Heart left ventricle (tissue), 16 donors: ENCODE measurements at regions of chr6 and their contacts with region 1.

Region 1: GRCh38 chr6:53171605-53172446 is 23.2 kb upstream of the GCM1 start:
- DNase-seq: peak; percentile 83 to 94 (median 87)
- ATAC-seq: peak; percentile 64 to 97 (median 94)
- H3K4me3 ChIP-seq: no peak overlapping the region
- H3K27ac ChIP-seq: no peak overlapping the region
- H3K4me1 ChIP-seq: peaks cover 0 to 11% (median 1%) of the 10 kb centered on the region in 12 donors
- H3K27me3 ChIP-seq: no peaks in the 10 kb centered on the region
- CTCF ChIP-seq: peak; percentile 100
- POLR2A ChIP-seq: no peak

Region 2: GRCh38 chr6:52904562-52905279 is 267.1 kb before region 1 on chr6:
- intact Hi-C with region 1: no loop called
- DNase-seq: no peak
- ATAC-seq: no peak
- H3K4me3 ChIP-seq: no peak overlapping the region
- H3K27ac ChIP-seq: no peak overlapping the region
- H3K4me1 ChIP-seq: no peaks in the 10 kb centered on the region
- H3K27me3 ChIP-seq: no peaks in the 10 kb centered on the region
- CTCF ChIP-seq: no peak
- POLR2A ChIP-seq: no peak

Region 3: DNA sequence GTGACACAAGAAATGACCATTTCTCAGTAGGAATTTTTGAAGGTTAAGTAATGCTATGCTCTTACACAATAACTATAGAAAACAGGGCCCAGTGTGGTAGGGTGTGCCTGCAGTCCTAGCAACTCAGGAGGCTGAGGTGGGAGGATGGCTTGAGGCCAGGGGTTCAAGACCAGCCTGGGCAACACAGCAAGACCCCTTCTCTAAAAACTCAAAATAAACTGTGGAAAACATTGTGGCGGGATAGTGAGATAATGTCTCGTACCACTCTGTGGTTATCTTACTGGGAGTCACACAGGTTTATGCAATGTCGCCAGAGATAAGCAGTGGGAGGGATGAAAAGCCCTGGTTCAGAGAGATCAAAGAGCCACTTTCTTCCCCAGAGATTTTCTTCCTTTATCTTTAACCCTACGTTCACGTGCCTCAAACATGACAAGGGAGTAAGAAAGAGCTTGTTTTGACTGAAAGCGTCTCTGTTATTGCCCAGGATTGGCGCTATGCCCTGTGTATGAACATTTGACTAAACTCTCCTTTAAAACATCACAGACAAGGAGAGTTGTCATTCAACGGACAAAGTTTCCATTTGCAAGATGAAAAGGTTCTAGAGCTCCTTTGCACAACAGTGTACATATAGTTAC is 37.1 kb before region 1 on chr6:
- intact Hi-C with region 1: no loop called
- DNase-seq: no peak
- ATAC-seq: no peak
- H3K4me3 ChIP-seq: no peak overlapping the region
- H3K27ac ChIP-seq: no peak overlapping the region
- H3K4me1 ChIP-seq: no peaks in the 10 kb centered on the region
- H3K27me3 ChIP-seq: peaks cover 0 to 4% (median 0%) of the 10 kb centered on the region in 9 donors
- CTCF ChIP-seq: no peak
- POLR2A ChIP-seq: no peak

Region 4: GRCh38 chr6:53284901-53285300 is 113.1 kb after region 1 on chr6:
- intact Hi-C with region 1: loop called in 6 of 10 experiments (anchors 5 to 10 kb)
- DNase-seq: no peak
- ATAC-seq: no peak
- H3K4me3 ChIP-seq: no peak overlapping the region
- H3K27ac ChIP-seq: no peak overlapping the region
- H3K4me1 ChIP-seq: peaks cover 0 to 47% (median 25%) of the 10 kb centered on the region in 12 donors
- H3K27me3 ChIP-seq: no peaks in the 10 kb centered on the region
- CTCF ChIP-seq: no peak
- POLR2A ChIP-seq: no peak

Region 5: DNA sequence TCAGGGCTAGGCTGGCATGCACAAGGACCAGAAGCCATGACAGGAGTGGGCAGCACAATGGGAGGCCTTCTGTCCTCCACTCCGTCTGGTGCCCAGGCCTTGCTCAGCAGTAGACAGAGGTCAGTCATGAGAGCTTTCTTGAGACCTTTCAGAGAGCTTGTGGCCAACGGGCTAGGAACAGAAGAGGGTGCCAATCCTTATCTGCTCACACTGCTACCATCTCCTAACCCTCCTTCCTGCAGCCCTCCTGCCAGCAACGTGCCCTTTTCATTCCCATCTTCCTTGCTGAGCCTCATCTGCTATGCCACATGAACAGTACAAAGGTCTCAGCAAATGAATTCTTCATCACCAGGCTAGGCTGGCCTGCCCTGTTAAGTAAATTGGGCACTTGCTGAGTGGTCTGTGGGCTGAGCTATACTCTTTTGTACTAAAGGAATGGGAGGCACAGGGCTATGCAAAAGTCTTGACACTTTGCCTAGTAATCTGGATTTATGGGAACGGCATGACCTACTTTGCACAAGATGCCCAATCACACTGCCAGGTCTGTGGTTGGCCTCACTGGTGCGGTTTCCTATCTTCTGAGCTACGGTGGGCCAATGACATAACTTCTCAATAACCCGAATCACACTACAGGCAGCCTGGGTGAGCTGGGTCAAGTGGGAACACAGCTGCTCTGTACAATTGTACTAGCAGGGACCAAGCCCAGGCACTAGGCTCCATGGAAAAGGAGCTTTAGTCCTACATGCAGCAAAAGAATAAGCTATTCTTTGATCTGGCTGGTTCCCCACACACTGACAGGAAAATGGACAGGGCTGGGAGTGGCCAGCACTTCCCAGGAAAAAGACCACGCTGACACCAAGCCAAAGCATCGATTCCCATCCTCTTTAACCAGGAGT is 129.1 kb after region 1 on chr6:
- intact Hi-C with region 1: loop called in 4 of 10 experiments (anchors 5 to 10 kb)
- DNase-seq: peak in 4 of 5 donors; percentile 44 to 54 (median 49)
- ATAC-seq: peak; percentile 81 to 92 (median 89)
- H3K4me3 ChIP-seq: no peak overlapping the region
- H3K27ac ChIP-seq: peak overlapping the region; percentile 43 to 88 (median 77)
- H3K4me1 ChIP-seq: peaks cover 19 to 80% (median 66%) of the 10 kb centered on the region in 12 donors
- H3K27me3 ChIP-seq: no peaks in the 10 kb centered on the region
- CTCF ChIP-seq: no peak
- POLR2A ChIP-seq: no peak

Region 6: DNA sequence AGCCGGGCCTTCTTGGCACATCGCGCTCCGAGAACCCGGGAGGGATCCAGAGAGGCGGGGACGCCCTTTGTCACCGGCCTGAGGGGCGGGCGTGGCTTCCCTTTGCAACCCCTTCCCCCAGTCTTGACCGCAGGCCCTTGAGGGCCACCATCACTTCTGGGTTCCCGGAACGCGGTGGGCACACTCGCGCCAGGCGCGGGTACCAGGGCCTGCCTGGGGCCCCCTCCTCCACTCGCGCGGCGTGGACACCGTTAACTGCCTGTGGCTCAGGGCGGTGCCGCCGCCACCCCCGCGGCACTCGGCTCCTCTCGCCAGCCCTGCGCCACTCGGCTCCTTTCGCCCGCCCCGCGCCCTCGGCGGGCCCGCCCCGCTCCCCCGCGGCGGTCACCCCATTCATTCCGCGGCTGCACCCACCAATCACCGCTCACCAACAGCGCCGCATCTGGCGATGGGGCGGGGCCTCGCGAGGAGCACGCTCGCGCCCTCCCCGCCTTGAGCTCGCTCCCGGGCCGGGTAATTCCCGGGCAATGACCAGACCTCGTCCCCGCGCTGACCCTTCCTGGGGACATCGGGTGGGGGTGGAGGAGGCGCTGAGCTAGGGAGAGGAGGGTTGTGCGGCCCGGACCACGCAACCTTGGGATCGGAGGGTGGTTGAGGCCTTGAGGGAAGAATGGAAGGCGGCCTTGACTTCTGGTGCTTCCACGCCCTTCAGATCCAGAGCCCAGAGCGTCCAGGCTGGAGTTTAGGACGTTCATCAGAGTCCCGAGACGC is 187.4 kb after region 1 on chr6:
- intact Hi-C with region 1: loop called in 1 of 10 experiments (anchors 5 kb)
- DNase-seq: peak; percentile 97 to 98 (median 97)
- ATAC-seq: peak; percentile 96 to 98 (median 98)
- H3K4me3 ChIP-seq: peak overlapping the region; percentile 49 to 78 (median 70)
- H3K27ac ChIP-seq: peak overlapping the region; percentile 90 to 97 (median 94)
- H3K4me1 ChIP-seq: peaks cover 0 to 29% (median 10%) of the 10 kb centered on the region in 12 donors
- H3K27me3 ChIP-seq: no peaks in the 10 kb centered on the region
- CTCF ChIP-seq: peak in 1 of 12 donors; percentile 22
- POLR2A ChIP-seq: peak; percentile 60 to 84

Region 7: DNA sequence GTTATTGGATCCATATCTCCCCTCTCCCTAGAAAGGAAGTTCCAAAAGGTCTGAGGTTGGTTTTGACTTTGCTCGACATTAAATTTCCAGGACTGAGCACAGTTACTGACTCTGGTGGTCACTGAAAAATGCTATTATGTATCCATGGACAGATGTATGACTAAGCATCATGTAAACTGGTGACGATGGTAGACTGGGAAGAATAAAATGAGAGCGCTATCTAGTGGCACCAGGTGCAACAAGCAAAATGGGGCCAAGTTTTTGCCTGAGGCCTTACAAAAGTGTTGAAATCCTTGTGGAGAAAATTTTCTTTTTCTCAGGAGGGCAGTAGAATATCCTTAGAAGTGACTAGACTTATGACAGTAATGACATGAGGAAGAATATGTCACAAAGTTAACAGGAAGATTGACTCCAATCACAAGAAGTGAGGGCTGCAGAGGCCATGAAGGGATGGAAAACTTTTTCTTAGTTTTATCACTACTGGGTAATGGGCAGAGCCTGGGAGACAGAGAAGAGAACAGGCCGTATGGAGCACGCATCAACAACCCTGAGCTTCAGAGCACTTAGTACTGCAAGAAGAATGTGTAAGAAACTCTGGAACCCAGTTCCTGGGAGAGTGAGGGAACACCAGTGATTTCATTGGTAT is 265.9 kb after region 1 on chr6:
- intact Hi-C with region 1: loop called in 5 of 10 experiments (anchors 2 to 5 kb)
- DNase-seq: no peak
- ATAC-seq: peak; percentile 49 to 73 (median 58)
- H3K4me3 ChIP-seq: no peak overlapping the region
- H3K27ac ChIP-seq: no peak overlapping the region
- H3K4me1 ChIP-seq: peaks cover 0 to 32% (median 17%) of the 10 kb centered on the region in 12 donors
- H3K27me3 ChIP-seq: no peaks in the 10 kb centered on the region
- CTCF ChIP-seq: peak; percentile 16 to 63 (median 49)
- POLR2A ChIP-seq: no peak

Region 8: GRCh38 chr6:53725791-53726431 is 554.1 kb after region 1 on chr6:
- intact Hi-C with region 1: loop called in 2 of 10 experiments (anchors 2 to 10 kb)
- DNase-seq: peak; percentile 68 to 86 (median 78)
- ATAC-seq: peak in 3 of 4 donors; percentile 88 to 89 (median 89)
- H3K4me3 ChIP-seq: no peak overlapping the region
- H3K27ac ChIP-seq: no peak overlapping the region
- H3K4me1 ChIP-seq: peaks cover 0 to 6% (median under 1%) of the 10 kb centered on the region in 12 donors
- H3K27me3 ChIP-seq: peaks cover 0 to 3% (median 0%) of the 10 kb centered on the region in 9 donors
- CTCF ChIP-seq: peak; percentile 88 to 99 (median 96)
- POLR2A ChIP-seq: no peak